Posterior vena cava (tissue), 2 donors: ENCODE measurements at regions of chr4 and their contacts with region 1.

Region 1: GRCh38 chr4:82543124-82543523 is 18.7 kb downstream of the TMEM150C start:
- DNase-seq: no peak

Region 2: DNA sequence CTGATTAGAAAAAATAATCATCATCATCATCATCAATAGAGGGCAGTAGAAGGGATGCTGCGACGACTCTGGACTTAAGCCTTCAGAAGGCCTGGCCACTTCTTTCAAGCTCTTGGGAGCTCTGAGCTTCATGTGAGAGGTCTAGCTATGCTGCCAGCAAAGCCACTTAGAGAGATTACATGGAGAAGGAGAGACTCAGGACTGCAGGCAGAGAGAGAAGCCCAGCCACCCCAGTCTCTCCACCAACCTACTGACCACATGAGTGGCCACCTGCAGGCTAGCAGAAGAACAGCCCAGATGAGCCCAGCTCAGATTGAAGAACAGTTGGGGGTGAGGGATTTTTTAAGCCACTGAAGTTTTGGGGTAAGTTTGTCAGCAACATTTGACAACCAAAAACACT is 35.8 kb after region 1 on chr4:
- intact Hi-C with region 1: loop called in 1 of 2 experiments (anchors 1 kb)
- DNase-seq: no peak

Region 3: GRCh38 chr4:83503974-83504373 is 960.9 kb after region 1 on chr4:
- intact Hi-C with region 1: no loop called
- DNase-seq: no peak